Posterior vena cava (tissue), 2 donors: ENCODE measurements at regions of chr2 and their contacts with region 1.

Region 1: GRCh38 chr2:58539973-58540372 is 298.8 kb upstream of the FANCL start:
- DNase-seq: no peak

Region 2: DNA sequence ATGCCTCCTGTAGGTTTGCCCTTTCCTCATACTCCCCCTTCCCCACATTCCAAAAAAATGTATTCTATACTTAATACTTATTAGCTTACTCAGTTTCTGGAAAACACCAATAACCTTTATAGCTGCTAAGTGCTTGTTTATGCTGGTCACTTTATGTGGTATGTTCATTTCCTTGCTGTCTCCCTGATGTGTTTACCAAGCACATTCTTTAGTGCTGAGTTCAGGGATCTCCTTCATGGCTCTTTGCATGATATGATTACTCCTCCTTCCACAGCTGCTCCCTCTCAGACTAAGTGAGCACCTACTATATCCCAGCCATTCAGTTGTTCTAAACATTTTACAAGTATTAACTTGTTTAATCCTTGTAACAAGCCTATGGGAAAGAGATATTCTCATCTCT is 399.4 kb after region 1 on chr2:
- intact Hi-C with region 1: loop called in 1 of 2 experiments (anchors 10 kb)
- DNase-seq: no peak

Region 3: DNA sequence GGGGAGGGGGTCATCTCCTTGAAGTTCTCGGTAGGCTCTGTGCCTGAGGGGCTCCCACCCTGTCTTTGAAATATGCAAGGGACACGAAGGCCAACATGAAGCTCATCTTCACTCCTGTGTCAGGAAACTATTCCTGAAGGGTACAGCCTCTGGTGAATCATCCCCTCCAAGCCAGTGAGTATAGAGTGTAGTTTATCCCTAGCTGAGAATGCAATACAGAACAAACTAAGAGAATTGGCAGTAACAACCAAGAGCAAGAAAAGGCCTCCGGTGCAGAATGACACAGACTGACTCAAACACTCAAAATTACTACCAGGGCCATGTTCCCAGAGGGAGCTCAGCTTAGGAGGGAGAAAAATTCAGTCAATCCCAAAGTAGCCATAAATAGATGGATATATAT is 1600.2 kb after region 1 on chr2:
- intact Hi-C with region 1: no loop called
- DNase-seq: no peak